Activated CD8-positive, alpha-beta T cell treated with anti-CD3 and anti-CD28 coated beads, Interleukin-2, amount 10 ng/mL, durations not matched to agents 7 days and 5 days (primary cell): ENCODE measurements at regions of chr20 and their contacts with region 1.

Region 1: DNA sequence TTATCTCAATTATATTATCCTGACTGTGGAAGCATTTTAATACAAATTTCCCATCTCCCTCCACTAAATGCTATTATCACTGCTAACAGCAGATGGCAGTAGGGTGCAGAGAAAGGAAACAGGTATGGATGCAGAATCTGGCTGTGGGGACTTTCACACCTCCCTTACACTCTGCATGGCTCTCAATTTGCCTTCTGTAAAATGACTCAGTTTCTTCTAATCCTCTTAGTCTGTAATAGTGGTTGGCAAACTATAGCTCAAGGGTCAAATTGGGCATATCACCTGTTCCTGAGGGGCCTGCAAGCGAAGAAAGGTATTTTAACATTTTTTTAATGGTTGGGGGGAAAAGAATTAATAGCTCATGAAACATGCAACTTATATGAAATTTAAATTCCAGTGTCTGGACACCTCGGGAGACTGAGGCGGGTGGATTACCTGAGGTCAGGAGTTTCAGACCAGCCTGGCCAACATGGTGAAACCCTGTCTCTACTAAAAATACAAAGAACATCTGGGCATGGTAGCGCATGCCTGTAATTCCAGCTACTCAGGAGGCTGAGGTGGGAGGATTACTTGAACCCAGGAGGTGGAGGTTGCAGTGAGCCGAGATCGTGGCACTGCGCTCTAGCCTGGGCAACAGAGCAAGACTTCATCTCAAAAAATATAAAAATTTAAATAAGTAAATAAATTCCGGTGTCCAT is 83.5 kb downstream of the ZMYND8 start:
- DNase-seq: peak; percentile 68
- ATAC-seq: peak; percentile 59
- H3K4me3 Mint-ChIP-seq: no peak overlapping the region
- H3K27ac Mint-ChIP-seq: no peak overlapping the region
- H3K4me1 Mint-ChIP-seq: peaks cover 39% of the 10 kb centered on the region
- H3K27me3 Mint-ChIP-seq: no peaks in the 10 kb centered on the region

Region 2: DNA sequence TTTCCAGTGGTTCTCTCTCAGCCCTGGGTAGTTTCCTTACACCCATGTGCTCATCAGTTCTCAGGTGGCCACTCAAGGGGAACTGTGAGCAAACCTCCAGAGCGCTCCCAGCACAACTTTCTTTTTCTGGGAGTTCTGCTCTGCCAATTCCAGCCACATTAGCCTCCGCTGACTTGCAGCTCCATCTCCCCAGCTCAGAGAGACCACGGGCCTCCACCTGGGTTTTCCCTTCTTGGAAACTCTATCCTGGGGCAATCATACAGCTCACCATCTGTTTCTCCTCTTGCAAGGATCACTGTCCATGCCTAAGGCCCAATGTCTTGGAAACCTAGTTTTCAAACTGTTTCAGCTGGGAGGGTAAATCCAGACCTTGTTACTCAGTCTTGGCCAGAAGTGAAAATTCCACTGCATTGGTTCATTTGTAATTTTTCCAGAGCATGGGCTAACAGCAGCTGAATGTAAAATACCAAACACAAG is 248.5 kb before region 1 on chr20:
- CTCF ChIA-PET with region 1: no interaction called
- POLR2A ChIA-PET with region 1: no interaction called
- DNase-seq: no peak
- ATAC-seq: no peak
- H3K4me3 Mint-ChIP-seq: no peak overlapping the region
- H3K27ac Mint-ChIP-seq: no peak overlapping the region
- H3K4me1 Mint-ChIP-seq: no peaks in the 10 kb centered on the region
- H3K27me3 Mint-ChIP-seq: peaks cover 24% of the 10 kb centered on the region

Region 3: DNA sequence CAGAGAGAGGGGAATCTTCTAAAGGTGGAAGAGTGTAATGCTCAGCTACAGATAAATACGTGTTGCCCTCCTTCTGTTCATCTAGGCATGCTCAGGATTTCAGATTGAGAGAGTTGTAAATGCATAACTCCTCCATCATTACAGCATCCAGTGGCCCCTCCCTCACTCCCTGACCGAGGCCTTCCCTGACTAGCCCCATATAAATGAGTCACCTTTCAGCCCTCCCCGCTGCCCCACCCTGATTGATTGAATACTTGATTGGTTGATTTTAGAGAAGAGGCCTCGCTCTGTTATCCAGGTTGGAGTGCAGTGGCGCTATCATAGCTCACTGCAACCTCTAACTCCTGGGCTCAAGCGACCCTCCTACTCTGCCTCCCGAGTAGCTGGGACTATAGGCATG is 184.7 kb before region 1 on chr20:
- CTCF ChIA-PET with region 1: no interaction called
- POLR2A ChIA-PET with region 1: no interaction called
- DNase-seq: no peak
- ATAC-seq: no peak
- H3K4me3 Mint-ChIP-seq: no peak overlapping the region
- H3K27ac Mint-ChIP-seq: no peak overlapping the region
- H3K4me1 Mint-ChIP-seq: no peaks in the 10 kb centered on the region
- H3K27me3 Mint-ChIP-seq: peaks cover 7% of the 10 kb centered on the region

Region 4: DNA sequence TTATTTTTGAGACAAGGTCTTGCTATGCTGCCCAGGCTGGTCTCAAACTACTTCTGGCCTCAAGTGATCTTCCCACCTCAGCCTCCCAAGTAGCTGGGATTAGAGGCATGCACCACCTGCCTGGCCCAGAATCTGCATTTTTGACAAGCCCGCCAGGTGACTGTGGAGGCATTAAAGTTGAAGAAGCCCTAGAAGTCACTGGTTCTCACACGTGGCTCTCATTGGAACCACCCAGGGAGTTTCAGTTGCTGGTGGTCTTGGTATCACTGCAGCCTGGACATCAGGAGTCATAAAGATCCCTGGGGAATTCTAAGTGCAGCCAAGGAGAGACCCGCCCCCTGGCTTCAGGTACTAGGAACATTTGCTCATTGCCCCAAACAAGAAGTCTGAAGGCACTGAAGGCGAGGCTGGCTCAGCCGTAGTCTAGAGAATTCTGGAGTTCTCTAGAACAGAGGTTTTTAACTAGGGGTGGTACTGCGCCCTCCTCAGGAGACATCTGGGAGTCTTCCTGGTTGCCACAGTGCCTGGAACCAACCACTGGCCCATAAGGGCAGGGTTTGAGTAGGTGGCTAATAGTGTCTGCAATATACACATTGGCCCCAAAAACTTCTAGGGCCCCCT is 99.3 kb before region 1 on chr20:
- CTCF ChIA-PET with region 1: no interaction called
- POLR2A ChIA-PET with region 1: no interaction called
- DNase-seq: no peak
- ATAC-seq: no peak
- H3K4me3 Mint-ChIP-seq: no peak overlapping the region
- H3K27ac Mint-ChIP-seq: no peak overlapping the region
- H3K4me1 Mint-ChIP-seq: no peaks in the 10 kb centered on the region
- H3K27me3 Mint-ChIP-seq: peaks cover 7% of the 10 kb centered on the region

Region 5: DNA sequence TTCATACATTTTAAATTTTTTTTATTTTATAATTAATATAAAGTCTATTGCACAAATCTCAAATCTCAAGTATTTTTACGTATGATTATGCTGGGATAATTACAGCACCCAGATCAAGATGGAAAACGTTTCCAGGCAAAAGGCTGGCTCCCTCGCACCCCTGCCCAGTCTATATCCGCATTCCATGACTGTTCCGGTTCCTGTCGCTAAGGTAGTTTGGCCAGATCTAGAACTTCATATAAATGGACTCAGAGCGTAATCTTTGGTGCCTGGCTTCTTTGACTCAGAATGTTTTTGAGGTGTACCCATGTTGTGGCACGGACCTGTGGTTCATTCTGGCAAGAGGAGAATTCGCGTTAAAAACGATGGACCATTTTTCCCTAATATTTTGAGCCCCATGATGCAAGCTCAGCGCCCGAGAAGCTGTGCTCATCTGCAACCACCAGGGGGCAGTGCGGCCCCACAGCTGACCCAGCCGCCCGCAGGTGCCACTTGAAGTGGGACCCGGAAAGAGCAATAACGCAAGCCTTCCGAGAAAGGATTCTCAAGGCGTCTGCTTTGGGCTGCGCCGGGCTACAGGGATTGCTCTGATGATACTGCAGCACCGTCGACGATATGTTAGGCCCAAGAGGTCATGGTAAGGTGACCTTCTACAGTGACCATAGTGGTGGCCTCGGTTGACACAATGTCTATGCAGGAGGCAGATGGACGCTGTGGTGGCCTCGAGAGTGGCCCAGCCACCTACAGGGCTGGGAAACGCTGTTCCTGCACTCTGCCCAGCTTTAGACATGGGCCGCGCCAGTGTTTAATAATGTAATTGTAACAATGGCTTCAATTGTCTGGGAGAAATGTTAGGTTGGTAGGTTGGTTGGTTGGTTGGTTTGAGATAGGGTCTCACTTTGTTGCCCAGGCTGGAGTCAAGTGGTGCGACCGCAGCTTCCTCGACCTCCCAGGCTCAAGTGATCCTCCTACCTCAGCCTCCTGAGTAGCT is 76.7 kb before region 1 on chr20:
- CTCF ChIA-PET with region 1: interaction called, 12 read pairs
- POLR2A ChIA-PET with region 1: no interaction called
- DNase-seq: peak; percentile 85
- ATAC-seq: peak; percentile 84
- H3K4me3 Mint-ChIP-seq: no peak overlapping the region
- H3K27ac Mint-ChIP-seq: peak overlapping the region; percentile 20
- H3K4me1 Mint-ChIP-seq: peaks cover 13% of the 10 kb centered on the region
- H3K27me3 Mint-ChIP-seq: peaks cover 5% of the 10 kb centered on the region

Region 6: GRCh38 chr20:47258745-47259695 is 14.0 kb before region 1 on chr20:
- CTCF ChIA-PET with region 1: interaction called, 23 read pairs
- POLR2A ChIA-PET with region 1: interaction called, 4 read pairs
- DNase-seq: no peak
- ATAC-seq: no peak
- H3K4me3 Mint-ChIP-seq: no peak overlapping the region
- H3K27ac Mint-ChIP-seq: peak overlapping the region; percentile 71
- H3K4me1 Mint-ChIP-seq: peaks cover 12% of the 10 kb centered on the region
- H3K27me3 Mint-ChIP-seq: no peaks in the 10 kb centered on the region

Region 7: GRCh38 chr20:47501483-47502270 is 228.6 kb after region 1 on chr20 and contains the start of gene NCOA3:
- CTCF ChIA-PET with region 1: interaction called, 10 read pairs
- POLR2A ChIA-PET with region 1: no interaction called
- DNase-seq: peak; percentile 95
- ATAC-seq: peak; percentile 86
- H3K4me3 Mint-ChIP-seq: peak within 1 kb of the TSS; percentile 96
- H3K27ac Mint-ChIP-seq: peak within 1 kb of the TSS; percentile 96
- H3K4me1 Mint-ChIP-seq: peaks cover 44% of the 10 kb centered on the region
- H3K27me3 Mint-ChIP-seq: no peaks in the 10 kb centered on the region
- total RNA-seq, gene NCOA3: 57.4 to 60.1 TPM

Region 8: DNA sequence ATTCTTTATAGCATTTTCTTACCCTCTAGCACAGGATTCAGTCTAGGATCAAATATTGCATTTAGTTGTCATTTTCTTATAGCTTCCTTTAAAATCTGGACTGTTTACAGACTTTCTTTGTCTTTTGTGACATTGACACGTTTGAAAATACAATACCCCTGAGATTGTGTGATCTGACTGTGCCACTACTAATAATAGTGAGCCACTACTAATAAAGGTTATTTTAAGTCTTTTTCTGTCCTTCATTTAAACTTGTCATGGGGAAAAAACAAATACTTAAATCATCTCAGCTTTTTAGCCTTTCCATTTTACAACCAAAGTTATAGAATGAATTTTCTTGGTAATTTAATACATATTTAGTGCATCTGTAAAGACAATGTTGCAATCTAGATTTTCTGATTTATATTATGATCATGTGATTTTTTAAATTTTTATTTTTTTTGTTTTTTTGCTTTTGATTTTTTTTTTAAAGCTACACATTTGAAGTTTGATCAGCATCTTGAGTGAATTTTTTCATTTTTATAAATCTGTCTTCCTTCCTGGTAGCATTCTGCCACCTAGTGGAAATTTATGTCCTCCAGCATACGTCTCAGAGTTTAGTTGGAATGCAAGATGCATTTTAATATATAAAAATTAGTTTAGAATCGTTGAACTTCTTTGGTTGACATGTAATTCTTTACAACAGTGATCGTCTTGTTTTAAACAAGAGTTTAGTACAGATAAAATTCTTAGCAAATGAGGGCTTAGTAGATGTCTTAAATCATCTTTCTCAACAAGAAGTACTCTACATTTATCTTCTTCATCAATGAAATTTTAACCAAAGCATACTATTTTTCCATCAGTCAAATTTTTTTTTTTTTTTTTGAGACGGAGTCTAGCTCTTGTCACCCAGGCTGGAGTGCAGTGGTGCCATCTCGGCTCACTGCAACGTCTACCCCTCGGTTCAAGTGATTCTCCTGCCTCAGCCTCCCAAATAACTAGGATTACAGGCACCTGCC is 348.1 kb after region 1 on chr20:
- CTCF ChIA-PET with region 1: interaction called, 59 read pairs
- POLR2A ChIA-PET with region 1: no interaction called
- DNase-seq: peak; percentile 38
- ATAC-seq: peak; percentile 44
- H3K4me3 Mint-ChIP-seq: no peak overlapping the region
- H3K27ac Mint-ChIP-seq: no peak overlapping the region
- H3K4me1 Mint-ChIP-seq: peaks cover 38% of the 10 kb centered on the region
- H3K27me3 Mint-ChIP-seq: no peaks in the 10 kb centered on the region